ENCODE measurements at regions of chr6 and their contacts with region 1.

Region 1: GRCh38 chr6:97059473-97059872 is 134.9 kb downstream of the KLHL32 start:
- DNase-seq: peak in 1 of 2 donors; percentile 53
- H3K4me3 ChIP-seq: no peak overlapping the region
- H3K27ac ChIP-seq: no peak overlapping the region
- H3K4me1 ChIP-seq: no peaks in the 10 kb centered on the region
- H3K27me3 ChIP-seq: peaks cover 0 to 7% (median 0%) of the 10 kb centered on the region in 3 donors
- CTCF ChIP-seq: peak in 5 of 7 experiments; percentile 27 to 47 (median 30)
- EP300 ChIP-seq: no peak
- POLR2A ChIP-seq: no peak

Region 2: GRCh38 chr6:96907498-96907897 is 152.0 kb before region 1 on chr6:
- intact Hi-C with region 1: loop called (anchors 10 kb)
- DNase-seq: no peak
- H3K4me3 ChIP-seq: no peak overlapping the region
- H3K27ac ChIP-seq: no peak overlapping the region
- H3K4me1 ChIP-seq: no peaks in the 10 kb centered on the region
- H3K27me3 ChIP-seq: peaks cover 0 to 3% (median 0%) of the 10 kb centered on the region in 3 donors
- CTCF ChIP-seq: no peak
- EP300 ChIP-seq: no peak
- POLR2A ChIP-seq: no peak